ENCODE measurements at regions of chr11 and their contacts with region 1.

Region 1: GRCh38 chr11:120108154-120108865 is 29.6 kb downstream of the TRIM29 start:
- DNase-seq: no peak
- H3K4me3 ChIP-seq: no peak overlapping the region
- H3K27me3 ChIP-seq: peaks cover 26% of the 10 kb centered on the region
- CTCF ChIP-seq: peak; percentile 100

Region 2: DNA sequence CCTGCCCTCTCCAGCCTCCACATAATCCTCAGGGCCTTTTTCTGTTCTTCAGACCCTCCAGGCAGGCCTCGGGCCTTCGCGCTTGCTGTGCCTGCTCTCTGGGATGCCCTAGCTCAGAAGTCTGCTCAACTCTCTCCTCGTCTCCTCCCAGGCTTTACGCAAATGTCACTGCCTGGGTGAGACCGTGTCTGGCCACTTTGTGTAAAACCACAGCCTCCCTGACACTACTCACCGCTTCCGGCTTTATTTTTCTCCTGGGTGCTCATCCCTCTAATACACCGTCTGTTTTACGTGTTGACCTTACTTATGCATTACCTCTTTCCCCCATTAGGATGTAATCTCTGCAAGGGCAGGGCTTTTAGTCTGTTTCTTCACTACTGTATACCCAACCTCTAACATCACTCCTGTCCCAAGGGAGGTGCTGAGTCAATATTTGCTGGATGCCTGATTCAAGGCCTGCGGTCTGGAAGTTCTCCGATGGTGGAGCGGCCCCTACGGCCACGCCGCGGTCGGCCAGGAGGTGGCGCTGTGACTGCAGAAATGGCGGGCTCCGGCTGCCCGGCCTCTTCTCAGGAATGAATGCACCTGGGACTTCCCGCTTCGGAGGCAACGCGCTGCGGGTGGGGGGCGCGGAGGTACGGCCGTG is 627.2 kb before region 1 on chr11:
- CTCF ChIA-PET with region 1: interaction called, 13 read pairs
- POLR2A ChIA-PET with region 1: no interaction called
- DNase-seq: peak; percentile 44
- H3K4me3 ChIP-seq: no peak overlapping the region
- H3K27me3 ChIP-seq: peaks cover 7% of the 10 kb centered on the region
- CTCF ChIP-seq: peak; percentile 98

Region 3: GRCh38 chr11:119666463-119667131 is 441.7 kb before region 1 on chr11:
- CTCF ChIA-PET with region 1: interaction called, 40 read pairs
- POLR2A ChIA-PET with region 1: no interaction called
- DNase-seq: no peak
- H3K4me3 ChIP-seq: no peak overlapping the region
- H3K27me3 ChIP-seq: no peaks in the 10 kb centered on the region
- CTCF ChIP-seq: peak; percentile 95

Region 4: GRCh38 chr11:119673759-119674336 is 434.5 kb before region 1 on chr11:
- CTCF ChIA-PET with region 1: interaction called, 19 read pairs
- POLR2A ChIA-PET with region 1: no interaction called
- DNase-seq: no peak
- H3K4me3 ChIP-seq: no peak overlapping the region
- H3K27me3 ChIP-seq: no peaks in the 10 kb centered on the region
- CTCF ChIP-seq: no peak

Region 5: GRCh38 chr11:119975561-119976152 is 132.7 kb before region 1 on chr11:
- CTCF ChIA-PET with region 1: no interaction called
- POLR2A ChIA-PET with region 1: no interaction called
- DNase-seq: no peak
- H3K4me3 ChIP-seq: no peak overlapping the region
- H3K27me3 ChIP-seq: no peaks in the 10 kb centered on the region
- CTCF ChIP-seq: no peak

Region 6: GRCh38 chr11:120089036-120090001 is 19.0 kb before region 1 on chr11:
- CTCF ChIA-PET with region 1: interaction called, 15 read pairs
- POLR2A ChIA-PET with region 1: no interaction called
- DNase-seq: no peak
- H3K4me3 ChIP-seq: no peak overlapping the region
- H3K27me3 ChIP-seq: no peaks in the 10 kb centered on the region; the same call in 1 of the 2 replicates
- CTCF ChIP-seq: no peak

Region 7: DNA sequence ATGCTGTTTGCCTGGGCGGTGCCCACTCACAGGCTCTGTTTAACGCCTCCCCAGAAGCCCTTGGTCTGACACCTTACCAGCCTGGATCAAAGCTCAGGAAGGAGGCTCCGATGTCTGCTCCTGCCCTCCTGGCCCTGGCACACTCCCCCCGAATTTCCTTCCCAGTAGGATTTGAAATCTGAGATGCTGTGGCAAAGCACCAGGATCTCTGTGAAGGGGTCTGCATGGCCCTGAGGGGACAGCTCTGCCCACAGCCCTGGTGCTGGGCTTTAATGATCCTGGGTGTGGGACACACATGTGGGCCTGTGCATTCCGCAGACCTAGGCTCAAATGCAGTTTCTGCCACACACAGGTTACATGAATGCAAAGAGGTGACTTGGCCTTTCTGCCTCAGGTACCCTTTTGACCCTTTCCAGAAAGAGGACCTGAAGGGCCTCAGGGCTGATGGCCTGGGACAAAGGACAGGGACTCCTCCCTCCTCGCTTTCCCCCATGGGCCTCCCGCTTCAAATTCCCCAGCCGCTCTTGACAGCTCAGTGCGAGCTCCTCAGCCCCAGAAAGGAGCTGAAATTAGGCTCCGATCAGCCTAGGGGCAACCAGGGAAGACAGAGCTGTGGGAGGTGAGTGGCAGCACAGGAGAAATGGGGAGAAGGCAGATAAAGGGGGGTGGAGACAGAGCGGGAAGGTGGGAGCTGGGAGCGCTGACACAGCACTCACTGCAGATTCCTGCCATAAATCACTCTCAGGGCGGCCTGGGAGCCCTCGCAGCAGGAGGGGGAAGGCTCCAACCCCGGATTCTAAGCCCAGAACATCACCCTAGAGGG is 11.7 kb before region 1 on chr11:
- CTCF ChIA-PET with region 1: interaction called, 26 read pairs
- POLR2A ChIA-PET with region 1: no interaction called
- DNase-seq: no peak
- H3K4me3 ChIP-seq: no peak overlapping the region
- H3K27me3 ChIP-seq: peaks cover 15% of the 10 kb centered on the region
- CTCF ChIP-seq: no peak

Region 8: DNA sequence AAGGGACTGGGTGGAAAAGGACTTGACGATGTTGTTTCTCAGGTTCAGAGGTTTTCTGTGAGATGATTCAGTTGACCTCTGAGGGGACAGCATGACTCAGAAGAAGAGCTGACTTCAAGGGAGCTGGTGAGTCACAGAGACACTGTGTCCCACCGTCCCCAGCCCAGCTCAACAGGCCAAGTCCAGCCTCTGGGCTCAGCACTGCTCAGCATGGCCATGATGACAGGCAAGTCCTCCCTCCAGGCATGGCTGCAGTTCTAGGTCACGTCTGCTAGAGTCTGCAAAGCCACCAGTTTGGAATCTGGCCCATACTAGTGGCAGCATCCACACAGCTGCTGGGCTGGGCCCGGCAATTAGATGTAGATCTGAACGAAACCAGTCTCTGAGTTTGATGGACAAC is 16.7 kb after region 1 on chr11:
- CTCF ChIA-PET with region 1: interaction called, 18 read pairs
- POLR2A ChIA-PET with region 1: no interaction called
- DNase-seq: peak; percentile 20
- H3K4me3 ChIP-seq: no peak overlapping the region
- H3K27me3 ChIP-seq: 0 out of 2 replicates have a peak, but pooled peaks cover 1% of the 10 kb centered on the region
- CTCF ChIP-seq: no peak